ENCODE measurements at regions of chr9 and their contacts with region 1.

Region 1: DNA sequence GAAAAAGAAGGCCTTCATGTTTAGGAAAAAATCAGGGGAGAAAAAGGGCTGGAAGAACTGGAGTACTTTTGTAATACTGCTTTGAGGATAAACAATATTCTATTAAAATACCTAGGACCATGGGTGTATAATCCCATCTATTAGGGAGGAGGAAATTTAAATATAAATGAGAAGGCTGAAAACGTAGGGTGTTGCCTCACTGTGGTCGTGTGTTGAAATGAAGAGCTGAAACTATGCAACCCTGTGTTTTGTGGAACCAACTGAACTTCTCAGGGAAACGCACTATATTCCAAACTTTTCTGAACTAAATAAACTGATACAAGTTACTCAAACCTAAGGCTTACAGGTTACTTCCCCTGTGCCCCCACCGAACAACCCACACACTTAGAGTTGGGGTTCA is 4.5 kb upstream of the CNTLN start:
- DNase-seq: no peak
- ATAC-seq: no peak
- H3K4me3 ChIP-seq: no peak overlapping the region
- H3K27ac ChIP-seq: no peak overlapping the region
- H3K4me1 ChIP-seq: peaks cover 5% of the 10 kb centered on the region
- CTCF ChIP-seq: no peak
- EP300 ChIP-seq: no peak
- POLR2A ChIP-seq: no peak
- RAD21 ChIP-seq: no peak

Region 2: DNA sequence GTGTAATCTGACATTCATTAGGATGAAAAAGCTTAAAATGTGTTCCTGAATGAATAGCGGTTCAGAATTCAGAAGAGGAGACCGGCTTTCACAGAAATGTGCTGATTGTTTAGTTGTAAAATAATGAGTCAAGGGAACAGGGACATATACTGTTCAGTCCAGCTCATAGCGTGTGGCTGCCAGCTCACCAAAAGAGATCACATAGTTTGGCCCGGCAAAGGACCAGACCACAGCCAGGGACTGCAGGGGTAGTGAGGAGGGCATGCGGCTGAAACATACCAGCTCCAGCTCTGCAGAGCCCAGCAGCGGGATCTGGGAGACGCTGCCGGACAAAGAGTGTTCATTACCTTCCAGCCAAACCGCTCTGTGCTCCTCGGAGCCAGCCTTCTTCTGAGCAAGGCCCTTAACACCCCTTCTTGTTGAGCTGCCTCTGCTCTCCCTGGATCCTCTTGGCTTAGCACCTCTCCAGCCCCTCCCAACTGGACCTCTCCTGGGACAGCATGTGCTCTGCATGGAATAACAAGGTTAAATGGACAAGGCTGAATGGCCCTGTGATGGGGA is 112.3 kb before region 1 on chr9:
- CTCF ChIA-PET with region 1: no interaction called
- POLR2A ChIA-PET with region 1: no interaction called
- DNase-seq: no peak
- ATAC-seq: no peak
- H3K4me3 ChIP-seq: no peak overlapping the region
- H3K27ac ChIP-seq: no peak overlapping the region
- H3K4me1 ChIP-seq: no peaks in the 10 kb centered on the region
- CTCF ChIP-seq: no peak
- EP300 ChIP-seq: no peak
- POLR2A ChIP-seq: no peak
- RAD21 ChIP-seq: no peak

Region 3: DNA sequence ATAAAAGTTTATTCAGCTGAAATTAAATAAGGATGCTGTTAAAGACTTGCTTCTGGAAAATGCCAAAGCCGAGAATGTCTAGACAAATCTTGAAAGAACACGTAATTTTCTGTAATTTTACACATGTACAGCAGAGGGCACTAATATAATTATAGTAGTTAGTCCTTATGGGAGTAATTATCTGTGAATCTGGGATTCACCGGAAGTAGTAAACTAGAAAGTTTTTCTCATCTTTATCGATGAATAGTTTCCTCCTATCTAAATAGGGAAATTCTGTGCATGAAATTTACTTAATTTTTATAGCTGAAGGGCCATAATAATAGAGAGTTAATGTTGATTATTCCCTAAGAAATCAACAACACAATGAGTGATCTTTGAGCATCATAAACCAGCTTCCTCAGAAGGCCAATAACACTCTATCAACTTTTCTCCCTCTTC is 13.9 kb before region 1 on chr9:
- CTCF ChIA-PET with region 1: interaction called, 21 read pairs
- POLR2A ChIA-PET with region 1: no interaction called
- DNase-seq: peak; percentile 31 to 52
- ATAC-seq: peak in 1 of 2 experiments; percentile 70; a peak in 3 of 6 replicates
- H3K4me3 ChIP-seq: no peak overlapping the region
- H3K27ac ChIP-seq: no peak overlapping the region
- H3K4me1 ChIP-seq: no peaks in the 10 kb centered on the region
- CTCF ChIP-seq: peak; percentile 72
- EP300 ChIP-seq: no peak
- POLR2A ChIP-seq: no peak
- RAD21 ChIP-seq: peak; percentile 62 to 65

Measured in A549 (cell line).